Ascending aorta (tissue), 2 donors: ENCODE measurements at regions of chr2 and their contacts with region 1.

Region 1: DNA sequence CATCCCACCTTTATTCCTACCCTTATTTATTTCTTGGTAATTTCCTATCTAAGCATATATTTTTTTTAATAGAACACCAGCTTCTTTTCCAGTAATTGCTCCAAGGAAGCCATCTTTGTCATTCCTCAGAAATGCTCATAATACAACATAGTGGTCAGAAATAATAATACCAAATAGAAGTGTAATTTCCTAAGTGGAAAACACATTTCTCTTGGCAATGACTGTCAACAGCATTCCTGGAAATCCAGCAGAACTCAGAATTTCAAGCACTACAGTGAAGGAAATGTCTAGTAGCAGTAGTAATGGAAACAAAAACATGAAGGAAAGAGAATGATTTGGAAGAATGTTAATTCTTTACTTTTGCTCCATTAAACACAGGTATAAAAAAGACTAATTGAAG is 56.6 kb downstream of the GDF7 start:
- DNase-seq: no peak
- H3K4me3 ChIP-seq: no peak overlapping the region
- H3K27ac ChIP-seq: peak overlapping the region; percentile 84 to 87
- H3K4me1 ChIP-seq: peaks cover 9 to 39% of the 10 kb centered on the region in 2 donors
- H3K27me3 ChIP-seq: no peaks in the 10 kb centered on the region
- CTCF ChIP-seq: no peak

Region 2: DNA sequence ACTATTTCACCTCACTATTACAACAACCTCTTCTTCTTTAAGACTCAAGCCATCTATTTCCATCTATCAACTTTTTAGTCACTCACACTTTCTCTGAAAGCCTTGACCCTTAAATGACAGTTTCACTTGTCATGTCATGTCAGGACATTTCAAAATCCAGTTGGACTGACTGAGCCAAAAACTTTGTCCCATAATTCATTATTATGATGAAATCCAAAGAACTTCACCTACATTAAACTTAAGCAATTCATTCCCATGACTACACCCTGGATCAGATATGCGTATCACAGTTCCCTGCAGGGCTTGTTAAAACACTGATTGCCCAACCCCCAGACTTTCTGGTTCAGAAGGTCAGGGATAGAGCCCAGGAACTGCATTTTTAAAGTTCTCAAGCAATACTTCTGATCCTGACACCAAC is 72.8 kb after region 1 on chr2:
- intact Hi-C with region 1: no loop called
- DNase-seq: no peak
- H3K4me3 ChIP-seq: no peak overlapping the region
- H3K27ac ChIP-seq: no peak overlapping the region
- H3K4me1 ChIP-seq: no peaks in the 10 kb centered on the region
- H3K27me3 ChIP-seq: no peaks in the 10 kb centered on the region
- CTCF ChIP-seq: no peak

Region 3: DNA sequence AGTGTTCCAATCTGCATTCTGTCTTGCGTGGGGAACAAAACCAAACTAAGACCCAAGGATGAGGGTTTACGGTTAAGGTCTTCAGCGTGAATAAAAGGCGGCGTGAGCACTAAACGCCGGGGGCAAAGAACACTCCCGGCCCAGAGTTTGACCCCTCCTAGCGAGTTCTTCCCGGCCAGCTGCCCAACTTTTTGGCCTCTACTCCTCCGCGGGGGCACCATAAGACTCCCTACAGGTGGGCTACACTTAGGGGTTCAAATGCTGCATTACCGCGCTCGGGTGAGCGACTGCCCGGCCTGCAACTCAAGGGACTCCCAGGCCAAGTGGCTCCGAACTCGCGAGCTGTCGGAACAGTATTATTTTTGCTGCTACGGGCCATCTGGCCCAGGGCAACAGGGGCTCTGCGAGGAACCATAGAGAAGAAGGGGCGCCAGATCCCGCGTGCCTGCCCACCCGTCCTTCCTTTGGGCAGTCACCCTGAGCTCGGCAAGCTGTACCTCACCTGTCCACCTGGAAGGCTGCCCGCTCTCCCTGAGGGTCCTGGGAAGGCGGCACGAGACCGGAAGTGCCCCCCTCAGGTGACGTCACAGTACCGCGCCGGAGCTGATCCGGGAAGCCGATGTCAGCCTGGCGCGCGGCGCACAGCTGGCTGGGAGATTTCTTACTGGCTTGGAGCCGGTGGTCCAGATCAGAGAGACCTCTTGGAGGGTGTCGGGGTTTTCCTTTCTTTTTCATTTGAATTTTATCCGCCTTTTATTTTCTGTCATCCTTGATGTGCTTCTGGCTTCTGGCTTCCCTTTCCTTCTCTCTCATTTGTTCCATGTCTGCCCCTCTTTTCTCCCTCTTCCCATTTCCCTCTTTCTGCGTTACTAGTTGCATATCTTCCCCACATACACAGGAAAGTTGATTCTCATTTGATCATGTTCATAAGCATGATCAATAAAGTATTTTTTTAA is 99.3 kb after region 1 on chr2 and contains the start of gene LDAH:
- intact Hi-C with region 1: loop called (anchors 1 kb)
- DNase-seq: peak; percentile 66 to 95
- H3K4me3 ChIP-seq: peak within 1 kb of the TSS; percentile 92 to 97
- H3K27ac ChIP-seq: peak within 1 kb of the TSS; percentile 96 to 97
- H3K4me1 ChIP-seq: peaks cover 0 to 3% of the 10 kb centered on the region in 2 donors
- H3K27me3 ChIP-seq: no peaks in the 10 kb centered on the region
- CTCF ChIP-seq: no peak
- total RNA-seq, gene LDAH: 15.6 TPM